PC-9 (cell line): ENCODE measurements at regions of chr6 and their contacts with region 1.

Region 1: DNA sequence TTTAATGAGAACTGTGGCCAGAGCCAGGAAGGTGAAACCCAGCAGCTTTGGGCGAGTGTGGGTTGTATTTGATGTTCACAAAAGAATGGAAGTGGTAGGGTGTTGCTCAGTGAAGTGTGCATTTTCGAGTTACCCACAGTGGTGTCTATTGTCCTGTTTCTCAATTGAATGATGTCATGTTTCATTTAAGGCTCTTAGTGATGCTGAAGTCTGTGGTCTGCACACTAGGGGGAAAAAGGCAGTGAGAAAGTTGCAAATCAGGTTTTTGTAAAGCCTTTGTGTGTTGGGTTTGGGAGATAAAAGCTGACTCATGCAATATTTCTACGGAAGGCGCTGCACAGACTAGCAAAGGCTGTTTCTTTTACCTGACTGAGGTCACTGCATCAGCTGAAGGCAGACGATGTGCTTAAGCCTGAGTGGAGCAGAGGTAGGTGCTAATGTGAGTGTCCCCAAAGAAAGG is 121.1 kb downstream of the PLEKHG1 start:
- DNase-seq: peak; percentile 45 to 97
- H3K4me3 ChIP-seq: no peak overlapping the region
- H3K27ac ChIP-seq: peak overlapping the region; percentile 89
- H3K4me1 ChIP-seq: peaks cover 73% of the 10 kb centered on the region
- H3K27me3 ChIP-seq: no peaks in the 10 kb centered on the region
- CTCF ChIP-seq: no peak; the same call in 1 of the 2 replicates

Region 2: GRCh38 chr6:150667977-150668716 is 52.7 kb before region 1 on chr6:
- CTCF ChIA-PET with region 1: no interaction called
- POLR2A ChIA-PET with region 1: no interaction called
- intact Hi-C with region 1: loop called (anchors 1 kb)
- DNase-seq: peak; percentile 88 to 90
- H3K4me3 ChIP-seq: peak overlapping the region; percentile 26; the same call in 1 of the 2 replicates
- H3K27ac ChIP-seq: peak overlapping the region; percentile 88
- H3K4me1 ChIP-seq: peaks cover 28% of the 10 kb centered on the region
- H3K27me3 ChIP-seq: no peaks in the 10 kb centered on the region
- CTCF ChIP-seq: no peak; the same call in 1 of the 2 replicates

Region 3: GRCh38 chr6:150959166-150959565 is 238.4 kb after region 1 on chr6:
- CTCF ChIA-PET with region 1: no interaction called
- POLR2A ChIA-PET with region 1: no interaction called
- intact Hi-C with region 1: no loop called
- DNase-seq: no peak
- H3K4me3 ChIP-seq: no peak overlapping the region
- H3K27ac ChIP-seq: no peak overlapping the region
- H3K4me1 ChIP-seq: no peaks in the 10 kb centered on the region
- H3K27me3 ChIP-seq: no peaks in the 10 kb centered on the region
- CTCF ChIP-seq: no peak